ENCODE measurements at regions of chr15 and their contacts with region 1.

Region 1: GRCh38 chr15:50813877-50814276 is 48.4 kb upstream of the SPPL2A start:
- DNase-seq: no peak
- H3K4me3 ChIP-seq: no peak overlapping the region
- H3K4me3 Mint-ChIP-seq: no peak overlapping the region
- H3K27ac ChIP-seq: no peak overlapping the region
- H3K27ac Mint-ChIP-seq: no peak overlapping the region
- H3K4me1 ChIP-seq: no peaks in the 10 kb centered on the region
- H3K4me1 Mint-ChIP-seq: no peaks in the 10 kb centered on the region
- H3K27me3 ChIP-seq: no peaks in the 10 kb centered on the region
- H3K27me3 Mint-ChIP-seq: peaks cover 2 to 5% of the 10 kb centered on the region in 2 donors

Region 2: DNA sequence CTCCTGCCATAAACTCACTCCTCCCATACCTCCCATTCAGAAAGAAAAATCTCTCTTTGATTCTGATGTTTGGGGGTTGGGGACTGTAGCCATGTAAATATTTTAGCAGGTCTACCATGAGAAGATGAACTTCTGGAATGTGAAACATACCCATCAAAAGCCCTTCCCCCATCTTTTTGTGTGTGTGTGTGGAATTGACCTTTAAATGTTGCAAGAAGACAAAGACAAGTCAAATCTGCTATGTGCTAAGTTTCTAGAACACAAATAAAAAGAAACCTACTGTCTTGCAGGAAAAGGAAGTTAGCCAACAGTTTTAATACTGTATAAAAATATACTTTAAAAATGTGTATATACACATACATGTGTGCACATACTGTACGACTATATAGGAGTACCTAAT is 237.7 kb before region 1 on chr15:
- CTCF ChIA-PET with region 1: no interaction called
- POLR2A ChIA-PET with region 1: no interaction called
- intact Hi-C with region 1: no loop called
- DNase-seq: no peak
- H3K4me3 ChIP-seq: no peak overlapping the region
- H3K4me3 Mint-ChIP-seq: no peak overlapping the region
- H3K27ac ChIP-seq: no peak overlapping the region
- H3K27ac Mint-ChIP-seq: peak overlapping the region in 1 of 7 donors; percentile 12
- H3K4me1 ChIP-seq: no peaks in the 10 kb centered on the region
- H3K4me1 Mint-ChIP-seq: peaks cover 0 to 1% (median 0%) of the 10 kb centered on the region in 4 donors
- H3K27me3 ChIP-seq: no peaks in the 10 kb centered on the region
- H3K27me3 Mint-ChIP-seq: no peaks in the 10 kb centered on the region

Region 3: GRCh38 chr15:50765195-50765973 is 48.5 kb before region 1 on chr15 and contains the start of gene SPPL2A:
- CTCF ChIA-PET with region 1: no interaction called
- POLR2A ChIA-PET with region 1: no interaction called
- intact Hi-C with region 1: no loop called
- DNase-seq: peak; percentile 71 to 84 (median 73)
- H3K4me3 ChIP-seq: peak within 1 kb of the TSS; percentile 85 to 91
- H3K4me3 Mint-ChIP-seq: peak within 1 kb of the TSS; percentile 87 to 97 (median 94)
- H3K27ac ChIP-seq: peak within 1 kb of the TSS; percentile 93
- H3K27ac Mint-ChIP-seq: peak within 1 kb of the TSS; percentile 94 to 98 (median 97)
- H3K4me1 ChIP-seq: peaks cover 24% of the 10 kb centered on the region
- H3K4me1 Mint-ChIP-seq: peaks cover 31 to 54% (median 44%) of the 10 kb centered on the region in 4 donors
- H3K27me3 ChIP-seq: no peaks in the 10 kb centered on the region
- H3K27me3 Mint-ChIP-seq: no peaks in the 10 kb centered on the region
- total RNA-seq, gene SPPL2A: 75.2 to 80.3 TPM

Region 4: DNA sequence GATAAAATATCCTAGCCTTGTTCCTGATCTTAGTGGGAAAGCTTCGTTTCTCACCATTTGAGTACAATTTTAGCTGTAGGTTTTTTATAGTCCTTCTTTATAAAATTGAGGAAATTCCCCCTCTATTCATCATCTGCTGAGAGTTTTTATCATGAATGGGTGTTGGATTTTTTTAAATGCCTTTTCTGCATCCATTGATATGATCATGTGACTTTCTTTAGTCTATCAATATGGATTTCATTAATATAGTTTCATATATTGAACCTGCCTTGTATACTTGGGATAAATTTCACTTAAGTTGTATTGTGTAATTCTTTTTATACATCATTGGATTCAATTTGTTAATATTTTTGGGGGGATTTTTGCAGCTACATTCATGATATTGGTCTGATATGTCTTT is 33.8 kb after region 1 on chr15:
- CTCF ChIA-PET with region 1: no interaction called
- POLR2A ChIA-PET with region 1: no interaction called
- intact Hi-C with region 1: loop called (anchors 1 kb)
- DNase-seq: no peak
- H3K4me3 ChIP-seq: no peak overlapping the region
- H3K4me3 Mint-ChIP-seq: no peak overlapping the region
- H3K27ac ChIP-seq: no peak overlapping the region
- H3K27ac Mint-ChIP-seq: no peak overlapping the region
- H3K4me1 ChIP-seq: no peaks in the 10 kb centered on the region
- H3K4me1 Mint-ChIP-seq: no peaks in the 10 kb centered on the region
- H3K27me3 ChIP-seq: no peaks in the 10 kb centered on the region
- H3K27me3 Mint-ChIP-seq: no peaks in the 10 kb centered on the region

Region 5: DNA sequence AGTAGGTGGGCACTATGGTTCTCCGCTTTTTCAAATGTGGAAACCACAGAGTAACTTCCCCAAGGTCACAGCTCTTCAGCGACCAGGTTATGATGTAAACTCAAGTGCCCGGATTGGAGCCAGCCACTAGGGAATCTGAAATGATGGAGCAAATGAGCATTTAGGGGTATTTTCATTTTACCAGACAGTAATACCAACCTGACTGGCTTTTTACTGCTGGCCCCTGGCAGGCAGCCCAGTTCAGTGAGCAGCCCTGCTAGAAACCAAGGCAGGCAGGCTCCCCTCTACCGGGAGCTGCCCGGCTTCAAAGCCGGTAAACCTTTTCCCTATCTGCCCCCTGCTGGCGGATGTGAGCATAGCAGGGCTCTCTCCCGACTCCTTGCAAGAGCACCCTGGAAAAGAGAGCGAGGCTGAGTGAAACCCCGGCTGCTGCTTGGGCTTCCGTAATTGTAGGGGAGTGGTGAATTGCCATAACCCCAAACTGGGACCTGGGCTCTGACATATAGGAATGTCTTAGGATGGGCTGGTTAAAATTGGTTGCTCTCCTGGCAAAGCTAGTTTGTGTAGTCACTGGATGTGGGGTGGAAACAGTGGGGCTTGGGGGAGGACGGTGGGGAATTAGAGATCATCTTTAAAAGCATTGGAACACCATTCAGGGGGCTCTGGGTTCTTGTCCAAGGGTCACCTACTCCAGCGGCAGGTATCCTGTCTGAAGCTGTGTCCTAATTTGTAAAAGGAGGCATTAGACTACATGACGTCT is 378.8 kb after region 1 on chr15:
- CTCF ChIA-PET with region 1: no interaction called
- POLR2A ChIA-PET with region 1: no interaction called
- intact Hi-C with region 1: no loop called
- DNase-seq: peak; percentile 31 to 53 (median 38)
- H3K4me3 ChIP-seq: no peak overlapping the region
- H3K4me3 Mint-ChIP-seq: no peak overlapping the region
- H3K27ac ChIP-seq: no peak overlapping the region
- H3K27ac Mint-ChIP-seq: no peak overlapping the region
- H3K4me1 ChIP-seq: peaks cover 7% of the 10 kb centered on the region
- H3K4me1 Mint-ChIP-seq: peaks cover 3 to 5% (median 4%) of the 10 kb centered on the region in 4 donors
- H3K27me3 ChIP-seq: peaks cover 6% of the 10 kb centered on the region
- H3K27me3 Mint-ChIP-seq: peaks cover 16 to 33% of the 10 kb centered on the region in 2 donors

Measured in CD4-positive, alpha-beta memory T cell (primary cell).